ENCODE measurements at regions of chr7 and their contacts with region 1.

Region 1: GRCh38 chr7:136104269-136104603 is 127.1 kb upstream of the MTPN start:
- DNase-seq: no peak
- H3K4me3 ChIP-seq: no peak overlapping the region
- H3K27me3 ChIP-seq: no peaks in the 10 kb centered on the region
- CTCF ChIP-seq: no peak

Region 2: GRCh38 chr7:136114966-136115762 is 10.9 kb after region 1 on chr7:
- CTCF ChIA-PET with region 1: interaction called, 12 read pairs
- POLR2A ChIA-PET with region 1: no interaction called
- DNase-seq: no peak
- H3K4me3 ChIP-seq: no peak overlapping the region
- H3K27me3 ChIP-seq: no peaks in the 10 kb centered on the region
- CTCF ChIP-seq: peak; percentile 81